WTC11 (cell line): ENCODE measurements at regions of chr5 and their contacts with region 1.

Region 1: GRCh38 chr5:179763215-179763945 is 30.4 kb upstream of the LTC4S start:
- DNase-seq: peak; percentile 63
- ATAC-seq: peak; percentile 82
- H3K4me3 Mint-ChIP-seq: no peak overlapping the region
- H3K27ac Mint-ChIP-seq: peak overlapping the region; percentile 86
- H3K4me1 Mint-ChIP-seq: peaks cover 41% of the 10 kb centered on the region
- H3K27me3 Mint-ChIP-seq: no peaks in the 10 kb centered on the region
- CTCF ChIP-seq: peak; percentile 64

Region 2: GRCh38 chr5:179732417-179732917 is 30.9 kb before region 1 on chr5 and contains the start of gene MAML1:
- CTCF ChIA-PET with region 1: interaction called, 11 read pairs
- POLR2A ChIA-PET with region 1: no interaction called
- DNase-seq: peak; percentile 100
- ATAC-seq: peak; percentile 95
- H3K4me3 Mint-ChIP-seq: peak within 1 kb of the TSS; percentile 96
- H3K27ac Mint-ChIP-seq: peak within 1 kb of the TSS; percentile 97
- H3K4me1 Mint-ChIP-seq: peaks cover 23% of the 10 kb centered on the region
- H3K27me3 Mint-ChIP-seq: no peaks in the 10 kb centered on the region
- CTCF ChIP-seq: no peak
- total RNA-seq, gene MAML1: 40.5 to 42.2 TPM (median 42.2 TPM) in 3 replicates

Region 3: DNA sequence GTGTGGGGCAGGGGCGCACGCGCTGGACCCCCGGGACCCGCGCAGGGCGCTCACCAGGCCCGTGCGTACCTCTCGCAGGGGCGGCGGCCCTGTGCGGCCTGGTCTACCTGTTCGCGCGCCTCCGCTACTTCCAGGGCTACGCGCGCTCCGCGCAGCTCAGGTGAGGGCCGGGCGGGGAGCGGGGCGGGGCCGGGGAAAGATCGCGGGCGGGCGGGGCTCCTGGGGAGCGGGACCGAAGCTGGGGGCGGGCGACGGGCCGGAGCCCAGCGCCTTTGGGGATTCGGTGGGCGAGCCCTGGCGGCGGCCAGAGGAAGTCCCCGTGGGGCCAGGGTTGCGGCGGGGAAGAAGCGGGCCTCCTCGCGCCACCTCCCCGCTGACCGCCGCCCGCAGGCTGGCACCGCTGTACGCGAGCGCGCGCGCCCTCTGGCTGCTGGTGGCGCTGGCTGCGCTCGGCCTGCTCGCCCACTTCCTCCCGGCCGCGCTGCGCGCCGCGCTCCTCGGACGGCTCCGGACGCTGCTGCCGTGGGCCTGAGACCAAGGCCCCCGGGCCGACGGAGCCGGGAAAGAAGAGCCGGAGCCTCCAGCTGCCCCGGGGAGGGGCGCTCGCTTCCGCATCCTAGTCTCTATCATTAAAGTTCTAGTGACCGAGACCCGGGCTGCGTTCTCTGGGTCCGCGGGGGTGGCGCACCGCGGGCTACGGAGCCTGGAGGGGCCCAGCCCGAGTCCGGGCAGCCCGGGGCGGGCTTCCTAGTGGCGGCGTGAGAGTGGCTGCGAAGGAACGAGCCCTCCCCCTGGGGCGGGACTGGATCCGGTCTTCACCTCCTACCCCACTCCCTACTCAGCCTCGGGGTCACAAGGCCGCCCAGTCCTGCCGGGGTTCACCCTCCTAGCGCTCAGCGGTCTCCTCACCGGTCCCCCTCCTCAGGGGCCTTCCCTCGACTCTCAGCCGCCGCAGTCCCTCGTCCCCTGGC is 32.8 kb after region 1 on chr5:
- CTCF ChIA-PET with region 1: interaction called, 39 read pairs
- POLR2A ChIA-PET with region 1: no interaction called
- DNase-seq: peak; percentile 84
- ATAC-seq: peak; percentile 61
- H3K4me3 Mint-ChIP-seq: peak overlapping the region; percentile 67
- H3K27ac Mint-ChIP-seq: peak overlapping the region; percentile 90; the same call in 1 of the 2 replicates
- H3K4me1 Mint-ChIP-seq: peaks cover 18% of the 10 kb centered on the region
- H3K27me3 Mint-ChIP-seq: no peaks in the 10 kb centered on the region
- CTCF ChIP-seq: peak; percentile 22; the same call in 1 of the 2 replicates

Region 4: GRCh38 chr5:179833056-179833708 is 69.8 kb after region 1 on chr5:
- CTCF ChIA-PET with region 1: no interaction called
- POLR2A ChIA-PET with region 1: no interaction called
- DNase-seq: no peak
- ATAC-seq: no peak
- H3K4me3 Mint-ChIP-seq: no peak overlapping the region
- H3K27ac Mint-ChIP-seq: no peak overlapping the region
- H3K4me1 Mint-ChIP-seq: peaks cover 19% of the 10 kb centered on the region
- H3K27me3 Mint-ChIP-seq: no peaks in the 10 kb centered on the region; the same call in 1 of the 2 replicates
- CTCF ChIP-seq: no peak

Region 5: GRCh38 chr5:179894301-179894895 is 131.0 kb after region 1 on chr5:
- CTCF ChIA-PET with region 1: no interaction called
- POLR2A ChIA-PET with region 1: no interaction called
- DNase-seq: no peak
- ATAC-seq: no peak
- H3K4me3 Mint-ChIP-seq: no peak overlapping the region
- H3K27ac Mint-ChIP-seq: no peak overlapping the region
- H3K4me1 Mint-ChIP-seq: peaks cover 13% of the 10 kb centered on the region
- H3K27me3 Mint-ChIP-seq: no peaks in the 10 kb centered on the region
- CTCF ChIP-seq: no peak

Region 6: GRCh38 chr5:179936976-179937681 is 173.7 kb after region 1 on chr5:
- CTCF ChIA-PET with region 1: no interaction called
- POLR2A ChIA-PET with region 1: no interaction called
- DNase-seq: no peak
- ATAC-seq: no peak
- H3K4me3 Mint-ChIP-seq: no peak overlapping the region
- H3K27ac Mint-ChIP-seq: no peak overlapping the region
- H3K4me1 Mint-ChIP-seq: no peaks in the 10 kb centered on the region
- H3K27me3 Mint-ChIP-seq: no peaks in the 10 kb centered on the region
- CTCF ChIP-seq: no peak